ENCODE measurements at regions of chr3 and their contacts with region 1.

Region 1: GRCh38 chr3:119676771-119677640 is at the start of gene COX17:
- DNase-seq: peak; percentile 87 to 98 (median 96)
- ATAC-seq: peak; percentile 91
- H3K4me3 ChIP-seq: peak within 1 kb of the TSS; percentile 62
- H3K4me3 Mint-ChIP-seq: peak within 1 kb of the TSS; percentile 78 to 98 (median 90)
- H3K27ac ChIP-seq: peak within 1 kb of the TSS; percentile 72
- H3K27ac Mint-ChIP-seq: peak within 1 kb of the TSS; percentile 94 to 99 (median 96)
- H3K4me1 ChIP-seq: peaks cover 14 to 16% of the 10 kb centered on the region in 2 donors
- H3K4me1 Mint-ChIP-seq: peaks cover 19 to 46% (median 41%) of the 10 kb centered on the region in 7 donors
- H3K27me3 ChIP-seq: no peaks in the 10 kb centered on the region
- H3K27me3 Mint-ChIP-seq: peaks cover 0 to 3% (median 0%) of the 10 kb centered on the region in 5 donors
- total RNA-seq, gene COX17: 25.6 to 55.0 (median 34.8) TPM

Region 2: GRCh38 chr3:119034256-119035013 is 642.6 kb before region 1 on chr3 and contains the start of gene IGSF11:
- CTCF ChIA-PET with region 1: no interaction called
- POLR2A ChIA-PET with region 1: no interaction called
- intact Hi-C with region 1: loop called in 1 of 2 experiments (anchors 1 kb)
- DNase-seq: peak; percentile 52 to 79 (median 68)
- ATAC-seq: peak; percentile 93
- H3K4me3 ChIP-seq: peak within 1 kb of the TSS; percentile 62
- H3K4me3 Mint-ChIP-seq: peak within 1 kb of the TSS; percentile 83 to 93 (median 90)
- H3K27ac ChIP-seq: no peak within 1 kb of the TSS
- H3K27ac Mint-ChIP-seq: peak within 1 kb of the TSS in 3 of 9 donors; percentile 46 to 81 (median 58)
- H3K4me1 ChIP-seq: no peaks in the 10 kb centered on the region
- H3K4me1 Mint-ChIP-seq: peaks cover 0 to 17% (median 10%) of the 10 kb centered on the region in 7 donors
- H3K27me3 ChIP-seq: peaks cover 5 to 7% of the 10 kb centered on the region in 2 donors
- H3K27me3 Mint-ChIP-seq: peaks cover 34 to 64% (median 48%) of the 10 kb centered on the region in 5 donors
- total RNA-seq, gene IGSF11: 0.15 to 0.85 (median 0.49) TPM in 4 of 5 experiments, not detected in the other

Region 3: DNA sequence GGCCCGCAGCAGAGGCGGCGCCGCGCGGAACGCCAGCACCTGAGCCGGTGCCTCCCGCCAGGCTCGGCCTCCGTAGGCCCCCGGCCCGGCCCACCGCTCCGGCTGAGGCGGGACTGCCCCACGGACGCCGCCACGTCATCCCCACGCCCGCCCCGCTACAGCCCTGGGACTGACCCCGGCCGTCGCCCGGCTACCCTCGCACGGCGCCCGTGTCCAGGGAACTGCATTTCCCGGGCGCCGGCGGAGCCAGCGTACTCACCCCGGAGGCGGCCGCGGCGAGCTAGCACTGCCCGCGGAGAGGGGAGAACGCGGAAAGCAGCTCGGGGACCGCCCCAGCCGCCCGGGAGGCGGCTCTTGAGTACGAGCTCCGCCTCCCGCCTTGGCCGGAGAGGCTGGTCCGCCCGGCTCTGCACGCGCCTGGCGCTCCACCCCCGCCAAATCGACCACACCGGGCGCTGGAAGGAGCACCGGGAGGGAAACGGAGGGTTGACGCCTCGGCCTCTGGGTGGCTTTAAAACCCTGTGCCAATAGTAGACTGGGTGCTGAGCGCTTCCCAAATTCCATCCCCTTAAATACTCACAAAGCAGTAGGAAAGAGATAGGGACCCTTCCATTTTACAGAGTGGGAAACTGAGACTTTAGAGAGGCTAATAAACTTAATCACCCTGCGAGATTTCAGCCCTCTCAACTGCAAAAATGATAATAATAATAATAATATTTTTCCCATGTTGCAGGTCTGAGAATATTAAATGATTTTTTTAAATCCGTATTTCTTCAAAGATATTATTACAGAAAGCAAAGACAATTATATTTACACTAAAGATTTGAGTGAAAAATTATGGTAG is 436.2 kb before region 1 on chr3 and contains the start of gene B4GALT4:
- CTCF ChIA-PET with region 1: no interaction called
- POLR2A ChIA-PET with region 1: no interaction called
- intact Hi-C with region 1: loop called (anchors 1 kb)
- DNase-seq: peak; percentile 59 to 79 (median 63)
- ATAC-seq: peak; percentile 78
- H3K4me3 ChIP-seq: peak within 1 kb of the TSS; percentile 71
- H3K4me3 Mint-ChIP-seq: peak within 1 kb of the TSS; percentile 90 to 99 (median 94)
- H3K27ac ChIP-seq: peak within 1 kb of the TSS; percentile 90
- H3K27ac Mint-ChIP-seq: peak within 1 kb of the TSS; percentile 83 to 96 (median 91)
- H3K4me1 ChIP-seq: peaks cover 23 to 27% of the 10 kb centered on the region in 2 donors
- H3K4me1 Mint-ChIP-seq: peaks cover 24 to 45% (median 36%) of the 10 kb centered on the region in 7 donors
- H3K27me3 ChIP-seq: no peaks in the 10 kb centered on the region
- H3K27me3 Mint-ChIP-seq: no peaks in the 10 kb centered on the region
- total RNA-seq, gene B4GALT4: 18.0 to 39.8 (median 31.9) TPM

Region 4: GRCh38 chr3:119463171-119464169 is 213.5 kb before region 1 on chr3 and contains the start of gene TMEM39A:
- CTCF ChIA-PET with region 1: no interaction called
- POLR2A ChIA-PET with region 1: interaction called, 5 read pairs
- intact Hi-C with region 1: loop called (anchors 1 kb)
- DNase-seq: peak; percentile 97 to 99 (median 98)
- ATAC-seq: peak; percentile 91
- H3K4me3 ChIP-seq: peak within 1 kb of the TSS; percentile 93
- H3K4me3 Mint-ChIP-seq: peak within 1 kb of the TSS; percentile 82 to 96 (median 93)
- H3K27ac ChIP-seq: peak within 1 kb of the TSS; percentile 86
- H3K27ac Mint-ChIP-seq: peak within 1 kb of the TSS; percentile 97 to 100 (median 99)
- H3K4me1 ChIP-seq: peaks cover 16 to 26% of the 10 kb centered on the region in 2 donors
- H3K4me1 Mint-ChIP-seq: peaks cover 22 to 56% (median 45%) of the 10 kb centered on the region in 7 donors
- H3K27me3 ChIP-seq: no peaks in the 10 kb centered on the region
- H3K27me3 Mint-ChIP-seq: peaks cover 0 to 4% (median 0%) of the 10 kb centered on the region in 5 donors
- total RNA-seq, gene TMEM39A: 34.9 to 59.5 (median 49.7) TPM

Region 5: DNA sequence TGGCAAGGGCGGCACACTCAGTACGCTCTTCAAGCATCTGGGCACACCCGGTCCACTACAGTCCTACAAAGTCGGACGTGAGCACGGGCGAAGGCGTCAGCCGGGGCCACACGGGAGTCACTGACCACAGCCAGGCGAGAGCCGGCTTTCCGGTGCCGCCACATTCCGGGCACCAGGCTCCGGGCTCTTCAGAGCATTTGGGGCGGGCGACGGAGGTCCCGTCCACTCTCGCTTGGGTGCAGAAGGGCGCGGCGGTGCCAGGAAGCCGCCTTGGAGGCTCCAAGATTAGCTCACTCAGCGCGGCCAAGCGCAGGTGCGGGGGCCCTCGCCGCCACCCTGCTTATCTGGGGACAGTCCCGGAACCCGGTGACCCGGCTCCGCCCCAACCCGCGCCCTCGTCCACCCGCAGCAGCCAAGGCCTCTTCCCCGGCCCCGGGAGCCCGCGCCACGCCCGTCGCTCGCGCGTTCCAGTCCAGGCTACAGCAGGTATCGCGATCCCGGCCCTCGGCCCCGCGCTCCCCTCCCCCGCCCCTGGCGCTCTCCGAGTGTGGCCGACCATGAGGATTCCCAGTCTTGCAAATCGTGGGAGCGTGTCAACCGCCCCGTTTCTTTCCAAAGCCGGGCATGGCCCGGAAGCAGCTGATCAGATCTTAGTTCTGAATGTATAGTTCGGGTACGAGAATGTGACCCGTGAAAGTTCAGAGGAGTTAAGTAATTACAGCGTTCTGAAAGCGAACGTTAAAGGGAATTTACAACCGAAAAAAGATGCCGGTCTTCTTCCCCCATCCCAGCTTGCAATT is 97.4 kb before region 1 on chr3 and contains the start of gene ADPRH:
- CTCF ChIA-PET with region 1: no interaction called
- POLR2A ChIA-PET with region 1: no interaction called
- intact Hi-C with region 1: loop called in 1 of 2 experiments (anchors 5 kb)
- DNase-seq: peak in 8 of 9 donors; percentile 3 to 75 (median 16)
- ATAC-seq: peak; percentile 84
- H3K4me3 ChIP-seq: peak within 1 kb of the TSS; percentile 61
- H3K4me3 Mint-ChIP-seq: peak within 1 kb of the TSS; percentile 86 to 98 (median 95)
- H3K27ac ChIP-seq: no peak within 1 kb of the TSS
- H3K27ac Mint-ChIP-seq: peak within 1 kb of the TSS; percentile 10 to 84 (median 57)
- H3K4me1 ChIP-seq: peaks cover 0 to 4% of the 10 kb centered on the region in 2 donors
- H3K4me1 Mint-ChIP-seq: peaks cover 0 to 22% (median 14%) of the 10 kb centered on the region in 7 donors
- H3K27me3 ChIP-seq: no peaks in the 10 kb centered on the region
- H3K27me3 Mint-ChIP-seq: peaks cover 4 to 12% (median 7%) of the 10 kb centered on the region in 5 donors
- total RNA-seq, gene ADPRH: 0.38 to 6.9 (median 1.3) TPM

Region 6: DNA sequence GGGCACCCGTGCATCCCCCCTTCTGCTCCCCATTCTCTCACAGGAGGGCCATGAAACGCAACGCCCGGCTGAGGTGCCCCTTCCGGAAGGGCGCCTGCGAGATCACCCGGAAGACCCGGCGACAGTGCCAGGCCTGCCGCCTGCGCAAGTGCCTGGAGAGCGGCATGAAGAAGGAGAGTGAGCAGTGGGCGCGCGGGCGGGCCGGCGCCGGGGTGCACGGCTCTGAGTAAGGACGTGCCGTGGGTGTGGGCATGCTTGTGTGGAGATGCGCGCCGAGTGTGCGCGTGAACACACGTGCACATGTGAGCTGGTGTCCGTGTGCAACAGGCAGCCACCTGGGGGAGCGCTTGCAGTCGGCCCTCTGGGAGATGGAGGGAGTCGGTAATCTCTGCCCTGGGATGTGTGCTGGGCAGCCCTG is 133.0 kb after region 1 on chr3:
- CTCF ChIA-PET with region 1: no interaction called
- POLR2A ChIA-PET with region 1: no interaction called
- intact Hi-C with region 1: loop called in 1 of 2 experiments (anchors 10 kb)
- DNase-seq: peak; percentile 17 to 57 (median 49)
- ATAC-seq: peak; percentile 83
- H3K4me3 ChIP-seq: peak overlapping the region; percentile 80
- H3K4me3 Mint-ChIP-seq: peak overlapping the region; percentile 82 to 94 (median 88)
- H3K27ac ChIP-seq: peak overlapping the region; percentile 33
- H3K27ac Mint-ChIP-seq: peak overlapping the region; percentile 44 to 93 (median 81)
- H3K4me1 ChIP-seq: peaks cover 0 to 8% of the 10 kb centered on the region in 2 donors
- H3K4me1 Mint-ChIP-seq: peaks cover 0 to 13% (median 10%) of the 10 kb centered on the region in 7 donors
- H3K27me3 ChIP-seq: no peaks in the 10 kb centered on the region
- H3K27me3 Mint-ChIP-seq: peaks cover 0 to 11% (median 0%) of the 10 kb centered on the region in 5 donors